PC-3 (cell line): ENCODE measurements at regions of chr17 and their contacts with region 1.

Region 1: DNA sequence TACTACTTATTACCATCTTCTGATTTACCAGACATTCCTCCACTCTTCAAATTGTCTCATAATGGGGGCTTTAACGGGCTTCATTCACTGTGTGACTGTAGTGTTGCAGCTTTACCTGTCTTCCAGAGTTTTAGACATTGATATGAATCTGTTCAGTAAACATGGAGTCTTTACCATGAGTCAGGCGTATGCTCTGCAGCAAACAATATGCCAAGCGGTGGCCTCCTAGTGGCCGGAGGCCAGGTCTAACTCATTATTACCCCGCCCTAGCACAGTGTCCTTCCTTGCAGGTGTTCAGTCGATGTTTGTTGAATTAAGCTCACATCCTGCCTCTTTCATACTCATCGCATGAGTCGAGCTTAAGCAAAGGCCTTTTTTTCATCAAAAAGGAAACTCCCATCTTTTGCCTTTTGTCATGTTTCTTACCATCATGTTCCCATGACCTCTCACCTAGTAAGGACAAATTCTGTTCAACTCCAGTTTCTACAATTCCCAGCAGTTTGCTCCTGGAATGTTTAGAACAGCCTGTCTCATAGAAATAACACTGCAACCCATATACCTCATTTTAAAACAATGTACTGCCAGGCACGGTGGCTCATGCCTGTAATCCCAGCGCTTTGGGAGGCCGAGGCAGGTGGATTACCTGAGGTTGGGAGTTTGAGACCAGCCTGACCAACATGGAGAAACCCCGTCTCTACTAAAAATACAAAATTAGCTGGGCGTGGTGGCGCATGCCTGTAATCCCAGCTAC is 39.4 kb downstream of the TUBD1 start:
- DNase-seq: peak; percentile 100
- ATAC-seq: peak; percentile 90
- H3K4me3 ChIP-seq: no peak overlapping the region
- H3K27ac ChIP-seq: peak overlapping the region; percentile 92
- H3K4me1 ChIP-seq: peaks cover 62% of the 10 kb centered on the region
- H3K27me3 ChIP-seq: no peaks in the 10 kb centered on the region
- CTCF ChIP-seq: peak; percentile 90

Region 2: DNA sequence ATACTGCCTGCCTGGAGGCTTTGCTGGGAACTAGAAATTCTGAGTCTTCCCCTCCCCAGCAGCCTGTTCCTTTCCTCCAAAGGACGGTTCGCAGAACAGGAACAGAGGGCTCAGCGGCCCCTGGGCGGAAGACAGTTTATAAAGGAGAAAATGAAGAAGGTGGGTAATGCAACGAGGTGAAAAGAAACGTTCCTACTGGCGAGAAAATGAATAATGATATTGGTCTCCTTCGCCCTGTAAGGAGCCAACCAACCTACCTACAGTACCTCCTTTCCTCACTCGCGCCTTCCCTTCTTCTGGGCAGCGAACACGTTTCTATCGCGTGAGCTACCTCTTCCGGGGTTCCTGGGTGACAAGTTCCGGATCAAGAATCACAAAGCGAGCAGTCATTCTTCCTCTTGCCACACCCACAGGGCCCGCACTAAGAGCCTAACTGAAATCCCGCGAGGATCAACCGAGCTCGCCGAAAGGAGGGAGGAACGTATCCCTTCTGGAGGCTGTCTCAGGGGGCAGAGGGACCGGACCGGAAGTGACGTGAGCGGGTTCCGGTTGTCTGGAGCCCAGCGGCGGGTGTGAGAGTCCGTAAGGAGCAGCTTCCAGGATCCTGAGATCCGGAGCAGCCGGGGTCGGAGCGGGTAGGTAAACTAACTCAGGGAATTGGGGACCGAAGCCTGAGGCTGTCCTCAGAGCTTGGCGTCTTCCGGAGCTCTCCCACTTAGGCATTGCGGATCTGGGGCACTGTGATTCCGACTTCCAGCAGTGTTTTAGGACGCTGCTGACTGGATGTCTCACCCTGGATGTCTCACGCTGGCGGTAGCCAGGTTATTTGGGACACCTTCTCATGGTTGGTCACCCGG is 146.0 kb before region 1 on chr17 and contains the starts of genes PTRH2 and VMP1:
- CTCF ChIA-PET with region 1: interaction called, 3 read pairs
- POLR2A ChIA-PET with region 1: no interaction called
- intact Hi-C with region 1: loop called (anchors 2 kb)
- DNase-seq: peak; percentile 100
- ATAC-seq: peak; percentile 96
- H3K4me3 ChIP-seq: peak within 1 kb of the TSS; percentile 76
- H3K27ac ChIP-seq: peak within 1 kb of the TSS; percentile 83
- H3K4me1 ChIP-seq: peaks cover 27% of the 10 kb centered on the region
- H3K27me3 ChIP-seq: no peaks in the 10 kb centered on the region
- CTCF ChIP-seq: no peak
- total RNA-seq, gene PTRH2: 69.8 and 82.1 TPM in 2 replicates
- total RNA-seq, gene VMP1: 237 and 277 TPM in 2 replicates